A673 (cell line): ENCODE measurements at regions of chr16 and their contacts with region 1.

Region 1: GRCh38 chr16:9099131-9099625 is 7.7 kb downstream of the HAPSTR1 start:
- DNase-seq: no peak
- H3K4me3 ChIP-seq: no peak overlapping the region
- H3K27ac ChIP-seq: peak overlapping the region; percentile 2
- H3K4me1 ChIP-seq: peaks cover 38% of the 10 kb centered on the region
- H3K27me3 ChIP-seq: no peaks in the 10 kb centered on the region
- CTCF ChIP-seq: no peak

Region 2: GRCh38 chr16:7363422-7364417 is 1735.5 kb before region 1 on chr16:
- CTCF ChIA-PET with region 1: no interaction called
- POLR2A ChIA-PET with region 1: no interaction called
- intact Hi-C with region 1: no loop called
- DNase-seq: no peak
- H3K4me3 ChIP-seq: no peak overlapping the region
- H3K27ac ChIP-seq: no peak overlapping the region
- H3K4me1 ChIP-seq: no peaks in the 10 kb centered on the region
- H3K27me3 ChIP-seq: no peaks in the 10 kb centered on the region
- CTCF ChIP-seq: no peak

Region 3: DNA sequence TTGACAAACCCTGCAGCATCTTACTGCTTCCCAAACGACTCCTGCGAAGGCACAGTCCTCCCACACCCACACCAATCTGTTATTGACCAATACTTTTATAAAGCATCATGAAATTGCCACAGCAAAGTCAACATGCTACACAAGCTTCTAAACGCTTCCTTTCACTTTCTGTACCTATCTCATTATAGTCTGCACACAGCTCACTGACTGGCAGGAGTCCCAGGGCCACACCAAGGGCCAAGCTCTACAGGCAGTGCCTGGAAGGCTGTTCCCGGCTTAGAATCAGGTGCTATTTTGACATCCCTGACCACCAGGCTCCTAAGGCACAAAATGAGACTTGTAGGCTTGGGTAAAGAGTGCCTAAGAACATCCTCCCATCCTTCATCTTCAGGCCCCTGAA is 175.0 kb before region 1 on chr16:
- CTCF ChIA-PET with region 1: no interaction called
- POLR2A ChIA-PET with region 1: no interaction called
- intact Hi-C with region 1: loop called (anchors 5 kb)
- DNase-seq: no peak
- H3K4me3 ChIP-seq: no peak overlapping the region
- H3K27ac ChIP-seq: no peak overlapping the region
- H3K4me1 ChIP-seq: peaks cover 14% of the 10 kb centered on the region
- H3K27me3 ChIP-seq: no peaks in the 10 kb centered on the region
- CTCF ChIP-seq: no peak

Region 4: GRCh38 chr16:9206156-9206555 is 107.0 kb after region 1 on chr16:
- CTCF ChIA-PET with region 1: no interaction called
- POLR2A ChIA-PET with region 1: no interaction called
- intact Hi-C with region 1: no loop called
- DNase-seq: peak; percentile 28
- H3K4me3 ChIP-seq: no peak overlapping the region
- H3K27ac ChIP-seq: no peak overlapping the region
- H3K4me1 ChIP-seq: no peaks in the 10 kb centered on the region
- H3K27me3 ChIP-seq: no peaks in the 10 kb centered on the region
- CTCF ChIP-seq: no peak